Right ventricle myocardium superior (tissue), 1 donor: ENCODE measurements at regions of chr12 and their contacts with region 1.

Region 1: DNA sequence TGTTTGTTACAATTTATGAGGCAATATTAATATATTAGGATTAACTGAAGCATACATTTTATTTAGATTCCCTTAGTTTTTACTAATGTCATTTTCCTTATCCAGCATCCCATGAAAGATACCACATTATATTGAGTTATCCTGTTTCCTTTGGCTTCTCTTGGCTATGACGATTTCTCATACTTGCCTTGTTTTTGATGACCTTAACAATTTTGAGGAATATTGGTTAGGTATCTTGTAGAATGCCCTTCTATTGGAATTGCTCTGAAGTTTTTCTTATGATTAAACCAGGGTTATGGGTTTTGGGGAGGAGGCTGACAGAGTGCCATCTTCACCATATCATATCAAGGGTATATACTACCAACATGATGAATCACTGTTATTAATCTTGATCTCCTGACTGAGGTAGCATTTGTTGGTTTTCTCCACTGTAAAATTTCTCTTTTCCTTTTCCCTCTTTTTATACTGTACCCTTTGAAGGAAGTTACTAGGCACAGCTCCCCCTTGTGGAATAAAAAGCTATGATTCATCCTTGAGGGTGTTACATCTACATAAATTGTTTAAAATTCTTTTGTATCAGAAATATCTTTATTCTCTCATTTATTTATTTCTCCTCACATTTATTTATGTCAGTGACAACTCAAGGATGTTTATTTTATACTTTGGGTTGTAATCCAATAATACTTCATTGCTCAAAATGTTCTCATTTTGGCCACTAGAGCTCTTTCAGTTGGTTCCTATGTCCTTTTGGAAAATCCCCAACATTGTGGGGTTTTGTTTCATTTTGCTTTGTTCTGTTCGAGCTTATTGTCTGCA is 239.0 kb downstream of the SLC16A7 start:
- DNase-seq: no peak
- ATAC-seq: no peak

Region 2: DNA sequence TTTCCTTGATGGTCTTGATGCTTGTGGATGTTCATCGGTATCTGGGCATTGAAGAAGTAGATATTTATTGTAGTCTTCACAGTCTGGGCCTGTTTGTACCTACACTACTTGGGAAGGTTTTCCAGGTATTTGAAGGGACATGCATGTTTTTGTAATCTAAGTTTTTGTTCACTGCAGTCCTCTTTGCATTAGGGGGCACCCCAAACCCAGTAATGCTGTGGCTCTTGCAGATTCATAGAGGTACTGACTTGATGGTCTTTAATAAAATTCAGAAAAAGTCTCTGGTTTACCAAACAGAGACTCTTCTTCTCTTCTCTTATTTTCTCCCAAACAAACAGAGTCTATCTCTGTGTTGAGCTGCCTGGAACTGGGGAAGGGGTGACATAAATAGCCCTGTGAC is 389.9 kb before region 1 on chr12:
- intact Hi-C with region 1: loop called (anchors 10 kb)
- DNase-seq: no peak
- ATAC-seq: no peak

Region 3: DNA sequence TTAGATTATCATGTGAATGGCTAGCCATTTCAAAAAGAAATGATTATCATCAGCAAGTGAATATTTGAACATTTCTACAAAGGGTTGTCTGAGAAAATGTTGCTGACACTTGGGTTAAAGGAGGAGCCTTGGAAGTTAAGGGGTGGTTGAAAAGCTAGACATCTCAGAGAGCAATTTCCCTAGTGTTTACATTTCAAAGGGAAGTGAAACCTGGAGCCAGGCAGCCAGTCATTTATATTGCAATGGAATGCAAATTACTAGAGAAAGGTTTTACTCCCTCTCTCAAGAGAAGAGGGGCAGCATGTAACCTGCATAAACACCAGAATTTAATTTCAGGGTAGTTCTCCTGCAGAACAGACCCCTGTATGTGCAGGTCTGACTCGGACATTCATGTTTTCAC is 39.9 kb after region 1 on chr12:
- intact Hi-C with region 1: no loop called
- DNase-seq: no peak
- ATAC-seq: no peak

Region 4: GRCh38 chr12:59929091-59929490 is 94.2 kb after region 1 on chr12:
- intact Hi-C with region 1: no loop called
- DNase-seq: no peak
- ATAC-seq: no peak

Region 5: GRCh38 chr12:60052483-60052882 is 217.6 kb after region 1 on chr12:
- intact Hi-C with region 1: no loop called
- DNase-seq: no peak
- ATAC-seq: no peak